ENCODE measurements at regions of chr3 and their contacts with region 1.

Region 1: DNA sequence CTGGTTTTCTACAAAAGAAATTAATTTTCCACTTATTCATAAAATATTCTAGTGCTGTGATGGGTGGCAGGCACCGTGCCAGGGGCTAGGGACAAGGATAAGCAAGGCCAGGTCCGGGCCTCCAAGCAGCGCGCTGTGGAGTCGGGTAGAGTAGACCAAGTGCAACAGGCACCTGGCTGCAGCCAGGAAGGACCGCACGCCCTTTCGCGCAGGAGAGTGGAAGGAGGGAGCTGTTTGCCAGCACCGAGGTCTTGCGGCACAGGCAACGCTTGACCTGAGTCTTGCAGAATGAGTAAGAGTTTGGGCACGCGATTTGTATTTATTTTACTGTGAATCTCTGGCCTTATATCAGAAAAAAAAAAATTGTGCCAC is at the start of gene CASR:
- DNase-seq: no peak
- ATAC-seq: no peak
- H3K4me3 ChIP-seq: peak within 1 kb of the TSS; percentile 30
- H3K27ac ChIP-seq: no peak within 1 kb of the TSS
- H3K4me1 ChIP-seq: peaks cover 3% of the 10 kb centered on the region
- H3K27me3 ChIP-seq: peaks cover 3 to 45% (median 9%) of the 10 kb centered on the region in 3 donors
- CTCF ChIP-seq: no peak
- total RNA-seq, gene CASR: 0.02 TPM in 1 of 4 donors, not detected in the others

Region 2: DNA sequence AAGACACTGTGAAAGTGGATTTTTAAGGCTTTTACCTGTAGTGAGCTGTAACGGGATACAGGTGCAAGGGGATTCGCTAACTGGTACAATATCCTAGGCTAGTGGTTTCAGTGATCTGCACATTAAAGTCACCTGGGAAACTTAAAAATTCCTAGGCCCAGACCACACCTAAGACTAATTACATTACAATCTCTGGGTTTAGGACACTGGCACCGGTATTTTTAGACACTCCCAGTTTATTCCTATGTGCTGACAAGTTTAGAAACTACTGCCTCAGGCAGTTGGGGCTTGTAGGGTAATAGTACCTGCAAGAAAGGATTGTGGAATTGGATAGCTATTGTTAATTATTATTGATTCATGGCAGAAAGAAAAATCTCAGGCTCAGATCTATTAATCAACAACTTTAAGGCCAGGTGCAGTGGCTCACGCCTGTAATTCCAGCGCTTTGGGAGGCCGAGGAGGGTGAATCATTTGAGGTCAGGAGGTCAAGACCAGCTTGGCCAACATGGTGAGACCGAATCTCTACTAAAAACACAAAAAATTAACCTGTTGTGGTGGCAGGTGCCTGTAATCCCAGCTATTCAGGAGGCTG is 50.5 kb before region 1 on chr3:
- intact Hi-C with region 1: no loop called
- DNase-seq: no peak
- ATAC-seq: no peak
- H3K4me3 ChIP-seq: no peak overlapping the region
- H3K27ac ChIP-seq: no peak overlapping the region
- H3K4me1 ChIP-seq: no peaks in the 10 kb centered on the region
- H3K27me3 ChIP-seq: no peaks in the 10 kb centered on the region
- CTCF ChIP-seq: no peak

Region 3: GRCh38 chr3:122167630-122168029 is 15.9 kb before region 1 on chr3:
- intact Hi-C with region 1: loop called in 1 of 2 experiments (anchors 2 kb)
- DNase-seq: no peak
- ATAC-seq: no peak
- H3K4me3 ChIP-seq: no peak overlapping the region
- H3K27ac ChIP-seq: no peak overlapping the region
- H3K4me1 ChIP-seq: no peaks in the 10 kb centered on the region
- H3K27me3 ChIP-seq: peaks cover 0 to 1% (median 0%) of the 10 kb centered on the region in 3 donors
- CTCF ChIP-seq: no peak

Region 4: DNA sequence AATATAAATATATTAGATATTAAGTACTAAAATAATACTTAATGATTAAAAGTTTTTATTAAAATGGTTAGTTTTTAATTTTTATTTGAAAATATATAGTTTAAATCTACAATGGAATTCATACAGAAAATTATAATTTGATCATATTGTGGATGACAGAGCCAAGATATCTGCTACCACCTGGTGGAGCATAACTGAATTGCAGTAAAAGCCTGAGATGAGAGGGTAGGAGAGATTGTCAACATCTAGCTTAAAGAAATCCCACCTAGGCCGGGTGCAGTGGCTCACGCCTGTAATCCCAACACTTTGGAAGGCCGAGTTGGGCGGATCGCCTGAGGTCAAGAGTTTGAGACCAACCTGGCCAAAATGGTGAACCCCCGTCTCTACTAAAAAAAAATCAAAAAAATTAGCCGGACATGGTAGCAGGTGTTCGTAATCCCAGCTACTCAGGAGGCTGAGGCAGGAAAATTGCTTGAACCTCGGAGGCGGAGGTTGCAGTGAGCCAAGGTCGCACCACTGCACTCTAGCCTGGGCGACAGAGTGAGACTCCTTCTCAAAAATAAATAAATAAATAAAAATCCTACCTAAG is 116.5 kb after region 1 on chr3:
- intact Hi-C with region 1: no loop called
- DNase-seq: no peak
- ATAC-seq: no peak
- H3K4me3 ChIP-seq: no peak overlapping the region
- H3K27ac ChIP-seq: no peak overlapping the region
- H3K4me1 ChIP-seq: no peaks in the 10 kb centered on the region
- H3K27me3 ChIP-seq: no peaks in the 10 kb centered on the region
- CTCF ChIP-seq: peak; percentile 21